MCF 10A (cell line): ENCODE measurements at regions of chr3 and their contacts with region 1.

Region 1: DNA sequence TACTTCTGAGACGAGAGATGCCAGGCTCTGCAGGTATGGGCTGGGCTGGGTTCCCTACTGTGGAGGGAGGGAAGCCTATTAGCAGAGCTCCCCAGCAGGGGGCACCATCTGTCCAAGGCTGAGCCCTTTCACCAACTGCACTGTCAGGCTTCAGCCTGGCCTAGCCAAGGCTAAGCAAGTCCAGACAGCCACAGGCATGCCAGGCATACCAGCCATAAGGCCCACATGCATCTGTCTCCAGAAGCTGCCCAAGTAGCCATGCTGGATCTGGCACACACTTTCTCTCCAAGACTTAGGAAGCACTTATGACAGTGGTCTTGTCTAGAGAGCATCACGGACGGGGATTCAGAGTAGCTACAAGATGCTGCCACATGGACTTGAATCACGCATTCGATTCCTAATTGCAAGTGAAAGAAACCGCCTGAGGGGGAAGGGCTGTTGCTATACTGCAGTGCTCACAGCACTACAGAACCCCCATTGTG is 28.3 kb downstream of the RUVBL1 start:
- DNase-seq: peak; percentile 88
- H3K4me3 Mint-ChIP-seq: no peak overlapping the region
- H3K27ac Mint-ChIP-seq: peak overlapping the region; percentile 67
- H3K4me1 Mint-ChIP-seq: peaks cover 8% of the 10 kb centered on the region
- H3K27me3 Mint-ChIP-seq: no peaks in the 10 kb centered on the region
- CTCF ChIP-seq: peak; percentile 88

Region 2: GRCh38 chr3:127867986-127868385 is 227.3 kb before region 1 on chr3:
- CTCF ChIA-PET with region 1: no interaction called
- POLR2A ChIA-PET with region 1: no interaction called
- intact Hi-C with region 1: no loop called
- DNase-seq: no peak
- H3K4me3 Mint-ChIP-seq: no peak overlapping the region
- H3K27ac Mint-ChIP-seq: no peak overlapping the region
- H3K4me1 Mint-ChIP-seq: peaks cover 5% of the 10 kb centered on the region
- H3K27me3 Mint-ChIP-seq: no peaks in the 10 kb centered on the region
- CTCF ChIP-seq: no peak

Region 3: DNA sequence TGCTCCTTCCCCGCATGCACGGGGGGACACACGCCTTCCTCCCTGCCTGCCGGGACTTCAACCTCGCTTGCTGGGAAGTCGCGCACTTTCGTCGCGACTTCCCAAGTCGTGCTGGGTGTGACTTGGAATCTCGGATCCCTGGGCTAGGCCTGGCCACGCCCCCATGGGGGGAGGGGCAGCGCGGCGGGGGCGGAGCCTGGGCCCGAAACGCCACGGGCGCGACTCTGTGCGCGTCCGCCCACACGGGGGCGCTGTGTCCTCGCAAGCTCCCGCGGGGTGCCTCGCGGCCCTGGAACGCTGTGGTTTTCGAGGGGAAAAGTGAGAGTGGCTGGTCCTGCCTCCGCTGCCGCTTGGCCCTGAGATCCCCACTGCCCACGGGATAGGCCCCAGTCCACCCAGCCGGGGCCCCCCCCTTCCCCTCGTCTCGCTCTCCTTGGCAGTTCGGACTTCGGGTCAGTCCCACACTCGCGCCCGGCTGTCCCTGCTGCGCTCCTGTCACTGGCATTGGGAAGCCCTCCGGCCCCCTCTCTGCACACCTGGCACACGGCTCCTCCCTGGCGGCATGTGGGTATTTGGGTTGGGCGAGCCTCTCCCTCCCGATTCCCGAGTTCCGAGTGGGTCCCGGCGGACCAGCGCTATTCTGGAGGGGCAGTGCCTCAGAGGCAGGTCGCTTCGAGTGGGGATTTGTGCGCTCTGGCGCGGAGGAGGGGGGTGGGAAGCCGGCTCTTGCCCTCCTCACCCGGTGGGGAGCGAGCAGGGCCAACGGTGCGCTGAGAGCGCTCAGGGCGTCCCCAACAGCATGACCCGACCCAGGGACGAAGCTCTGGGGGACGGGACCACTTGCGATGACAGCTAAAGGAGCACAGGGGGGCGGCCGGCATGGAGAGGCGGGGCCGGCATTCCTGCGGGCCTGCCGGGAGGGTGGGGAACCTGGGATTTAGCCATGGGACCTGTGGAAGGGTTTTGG is 19.5 kb before region 1 on chr3:
- CTCF ChIA-PET with region 1: interaction called, 66 read pairs
- POLR2A ChIA-PET with region 1: interaction called, 3 read pairs
- intact Hi-C with region 1: no loop called
- DNase-seq: peak; percentile 70
- H3K4me3 Mint-ChIP-seq: peak overlapping the region; percentile 72
- H3K27ac Mint-ChIP-seq: no peak overlapping the region
- H3K4me1 Mint-ChIP-seq: peaks cover 7% of the 10 kb centered on the region
- H3K27me3 Mint-ChIP-seq: no peaks in the 10 kb centered on the region
- CTCF ChIP-seq: peak; percentile 89

Region 4: DNA sequence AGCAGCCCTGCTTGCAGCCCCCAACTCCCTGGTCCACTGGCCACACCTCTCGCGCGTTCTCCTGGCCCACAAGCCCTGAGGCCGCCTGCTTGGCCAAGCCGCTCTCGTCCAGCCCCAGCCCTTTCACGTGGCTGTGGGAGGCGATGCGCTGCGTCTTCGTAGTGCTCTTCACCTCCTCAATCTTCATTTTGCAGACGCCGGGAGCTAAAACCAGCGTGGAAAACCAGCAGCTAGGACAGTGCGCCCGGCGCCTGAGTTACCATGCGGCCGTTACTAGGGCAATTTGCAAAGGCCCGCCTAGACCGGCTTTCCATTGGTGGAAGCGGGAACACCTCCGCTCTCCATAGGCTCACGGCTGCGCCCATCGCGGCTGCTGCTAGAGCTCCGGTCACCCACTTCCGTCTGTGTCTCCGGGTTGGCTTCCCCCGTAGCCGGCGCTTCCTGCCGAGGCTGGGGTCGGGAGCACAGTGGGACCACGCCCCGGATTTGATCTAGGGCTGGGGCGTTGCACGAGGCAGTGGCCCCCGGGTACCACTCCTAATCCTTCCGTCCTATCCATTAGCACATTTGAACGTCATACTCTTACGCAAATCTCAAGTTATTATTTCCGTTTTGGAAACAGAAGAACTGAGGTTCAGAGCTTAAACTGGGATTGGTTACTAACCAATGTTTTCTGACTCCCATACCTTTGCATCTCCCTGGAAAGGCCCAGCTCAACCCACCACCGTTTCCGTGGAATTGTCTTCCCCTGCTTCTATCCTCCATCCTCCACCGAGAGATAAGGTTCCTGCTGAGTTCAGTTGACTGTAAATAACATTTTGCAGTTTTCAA is 28.5 kb after region 1 on chr3 and contains the start of gene RUVBL1:
- CTCF ChIA-PET with region 1: interaction called, 20 read pairs
- POLR2A ChIA-PET with region 1: interaction called, 23 read pairs
- intact Hi-C with region 1: no loop called
- DNase-seq: peak; percentile 98
- H3K4me3 Mint-ChIP-seq: peak within 1 kb of the TSS; percentile 97
- H3K27ac Mint-ChIP-seq: peak within 1 kb of the TSS; percentile 95
- H3K4me1 Mint-ChIP-seq: peaks cover 23% of the 10 kb centered on the region
- H3K27me3 Mint-ChIP-seq: no peaks in the 10 kb centered on the region
- CTCF ChIP-seq: no peak
- total RNA-seq, gene RUVBL1: 88.1 and 114 TPM in 2 replicates

Region 5: GRCh38 chr3:128231596-128231995 is 136.3 kb after region 1 on chr3:
- CTCF ChIA-PET with region 1: no interaction called
- POLR2A ChIA-PET with region 1: no interaction called
- intact Hi-C with region 1: no loop called
- DNase-seq: no peak
- H3K4me3 Mint-ChIP-seq: no peak overlapping the region
- H3K27ac Mint-ChIP-seq: no peak overlapping the region
- H3K4me1 Mint-ChIP-seq: no peaks in the 10 kb centered on the region
- H3K27me3 Mint-ChIP-seq: no peaks in the 10 kb centered on the region
- CTCF ChIP-seq: no peak

Region 6: DNA sequence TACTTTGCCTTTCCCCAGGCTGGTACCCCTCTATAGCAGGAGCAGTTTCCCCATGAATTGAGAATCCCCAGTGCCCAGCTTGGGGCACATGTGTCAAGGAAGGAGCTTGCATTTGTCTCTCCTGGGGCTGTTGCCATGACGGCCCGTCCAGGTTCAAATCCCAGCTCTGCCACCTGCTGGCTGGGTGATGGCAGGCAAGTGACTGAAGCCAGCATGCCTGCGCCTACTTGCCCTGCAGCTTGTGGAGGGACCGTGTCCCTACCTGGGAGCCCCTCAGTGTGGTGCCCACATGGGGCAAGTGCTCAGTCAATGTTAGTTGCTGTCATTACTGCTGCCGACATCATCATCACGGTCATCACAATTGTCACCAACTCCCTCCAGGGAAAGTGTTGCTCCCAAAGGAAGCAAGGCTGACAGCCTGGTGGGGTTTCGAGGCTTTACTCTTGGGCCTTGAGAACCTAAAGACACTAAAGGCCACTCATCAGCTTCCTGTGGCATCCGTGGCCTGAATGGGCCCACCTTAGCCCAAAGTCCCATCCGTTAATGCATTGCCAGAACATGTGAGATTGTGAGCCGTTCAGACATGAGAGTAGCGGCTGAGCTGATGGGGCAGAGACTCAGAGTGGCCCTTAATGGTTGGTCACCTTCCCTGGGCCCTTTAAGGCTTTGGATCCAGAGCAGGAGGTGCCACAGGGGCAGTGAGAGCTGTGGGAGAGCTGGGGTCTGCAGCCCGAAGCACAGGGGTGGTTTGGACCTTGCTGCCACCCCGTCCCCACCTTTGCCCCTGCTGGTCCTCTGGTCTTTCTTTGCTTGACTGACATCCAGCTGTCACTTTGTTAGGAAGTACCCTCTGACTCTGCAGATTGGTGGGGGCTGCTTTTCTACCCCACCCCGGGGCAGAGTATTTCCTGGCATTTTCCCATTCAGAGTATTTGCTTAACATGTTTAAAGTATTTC is 227.1 kb after region 1 on chr3:
- CTCF ChIA-PET with region 1: interaction called, 11 read pairs
- POLR2A ChIA-PET with region 1: no interaction called
- intact Hi-C with region 1: loop called (anchors 10 kb)
- DNase-seq: peak; percentile 48
- H3K4me3 Mint-ChIP-seq: no peak overlapping the region
- H3K27ac Mint-ChIP-seq: no peak overlapping the region
- H3K4me1 Mint-ChIP-seq: no peaks in the 10 kb centered on the region
- H3K27me3 Mint-ChIP-seq: no peaks in the 10 kb centered on the region
- CTCF ChIP-seq: peak; percentile 19

Region 7: DNA sequence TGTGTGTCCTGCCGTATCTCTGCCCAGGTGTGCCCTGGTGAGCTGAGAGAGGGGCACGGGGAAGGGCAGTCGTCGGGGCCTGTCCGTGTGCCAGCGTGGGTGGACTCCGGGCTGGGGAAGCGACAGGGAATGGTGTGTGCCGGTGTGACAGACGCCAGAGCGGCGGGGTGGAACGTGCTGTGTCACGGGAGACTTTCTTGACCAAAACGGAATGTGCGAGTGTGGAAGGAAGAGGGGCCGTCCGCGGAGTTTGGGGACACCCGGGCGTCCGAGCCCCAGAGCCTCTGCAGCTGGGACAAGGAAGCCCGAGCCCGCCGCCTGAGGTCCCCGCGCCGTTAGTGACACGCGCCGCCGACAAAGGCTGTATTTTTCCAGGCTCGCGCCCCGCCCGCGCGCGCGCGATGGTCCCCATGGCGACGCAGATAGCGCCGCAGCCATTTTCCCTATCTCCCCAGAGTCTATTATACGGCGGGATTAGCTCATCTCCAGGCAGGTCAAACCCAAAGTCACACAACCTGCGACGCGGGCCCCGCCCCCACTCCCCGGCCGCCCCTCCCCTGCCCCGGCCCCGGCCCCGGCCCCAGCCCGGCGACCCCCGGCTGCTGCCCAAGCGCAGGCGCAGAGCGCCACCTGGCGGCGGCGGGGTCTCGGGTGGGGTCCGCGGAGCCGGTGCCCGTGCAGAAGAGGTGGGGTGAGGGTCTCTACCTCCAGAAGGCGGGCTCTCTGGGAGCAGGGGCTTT is 402.3 kb after region 1 on chr3:
- CTCF ChIA-PET with region 1: interaction called, 3 read pairs
- POLR2A ChIA-PET with region 1: interaction called, 3 read pairs
- intact Hi-C with region 1: loop called (anchors 5 kb)
- DNase-seq: peak; percentile 12
- H3K4me3 Mint-ChIP-seq: peak overlapping the region; percentile 62
- H3K27ac Mint-ChIP-seq: no peak overlapping the region
- H3K4me1 Mint-ChIP-seq: no peaks in the 10 kb centered on the region
- H3K27me3 Mint-ChIP-seq: peaks cover 44% of the 10 kb centered on the region
- CTCF ChIP-seq: peak; percentile 79

Region 8: GRCh38 chr3:128607710-128608048 is 512.4 kb after region 1 on chr3:
- CTCF ChIA-PET with region 1: interaction called, 32 read pairs
- POLR2A ChIA-PET with region 1: no interaction called
- intact Hi-C with region 1: loop called (anchors 5 kb)
- DNase-seq: no peak
- H3K4me3 Mint-ChIP-seq: no peak overlapping the region
- H3K27ac Mint-ChIP-seq: no peak overlapping the region
- H3K4me1 Mint-ChIP-seq: no peaks in the 10 kb centered on the region
- H3K27me3 Mint-ChIP-seq: no peaks in the 10 kb centered on the region
- CTCF ChIP-seq: no peak